Common myeloid progenitor, CD34-positive (primary cell): ENCODE measurements at regions of chr20 and their contacts with region 1.

Region 1: GRCh38 chr20:8043687-8044282 is 24.2 kb upstream of the TMX4 start:
- DNase-seq: peak; percentile 61 to 79 (median 74)
- H3K4me3 ChIP-seq: no peak overlapping the region
- H3K27ac ChIP-seq: no peak overlapping the region
- H3K4me1 ChIP-seq: peaks cover 0 to 3% (median 1%) of the 10 kb centered on the region in 4 experiments
- H3K27me3 ChIP-seq: no peaks in the 10 kb centered on the region

Region 2: DNA sequence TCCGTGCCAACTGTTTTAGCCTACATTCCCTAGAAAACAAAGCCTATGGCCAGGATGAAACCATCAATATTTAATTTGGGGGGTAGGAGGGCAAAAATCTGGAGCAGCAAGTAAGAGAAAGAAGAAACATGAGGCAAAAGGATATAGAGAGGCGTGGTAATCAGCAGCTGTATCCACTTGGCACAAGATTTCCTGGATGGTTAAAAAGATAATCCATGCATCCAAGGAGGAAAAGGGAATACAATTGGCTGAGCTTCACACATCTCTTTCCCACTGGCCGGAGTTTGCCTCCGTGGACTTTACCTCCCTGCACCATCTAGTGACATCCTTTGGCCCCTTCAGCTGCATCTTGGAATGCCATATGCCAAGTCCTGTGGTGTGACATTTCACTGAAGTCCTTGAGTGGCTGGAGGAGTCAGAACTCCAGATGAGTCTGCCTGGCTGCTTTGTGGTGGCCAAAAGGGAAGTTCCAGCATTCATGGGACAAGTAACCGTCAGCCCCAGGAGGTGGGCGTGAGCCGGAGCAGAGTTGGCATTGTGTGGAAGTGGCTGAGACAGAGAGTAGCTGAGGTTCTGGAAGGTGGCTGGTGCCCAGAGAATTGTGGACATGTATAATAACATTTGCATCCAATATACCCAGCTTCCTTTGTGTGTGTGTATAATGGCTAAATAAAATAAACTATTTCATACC is 10.5 kb before region 1 on chr20:
- CTCF ChIA-PET with region 1: interaction called, 16 read pairs
- POLR2A ChIA-PET with region 1: no interaction called
- DNase-seq: no peak
- H3K4me3 ChIP-seq: no peak overlapping the region
- H3K27ac ChIP-seq: no peak overlapping the region
- H3K4me1 ChIP-seq: no peaks in the 10 kb centered on the region
- H3K27me3 ChIP-seq: no peaks in the 10 kb centered on the region

Region 3: GRCh38 chr20:8055096-8055495 is 11.3 kb after region 1 on chr20:
- CTCF ChIA-PET with region 1: interaction called, 13 read pairs
- POLR2A ChIA-PET with region 1: no interaction called
- DNase-seq: no peak
- H3K4me3 ChIP-seq: no peak overlapping the region
- H3K27ac ChIP-seq: no peak overlapping the region
- H3K4me1 ChIP-seq: peaks cover 0 to 11% (median 7%) of the 10 kb centered on the region in 4 experiments
- H3K27me3 ChIP-seq: no peaks in the 10 kb centered on the region

Region 4: GRCh38 chr20:8073116-8073832 is 29.5 kb after region 1 on chr20:
- CTCF ChIA-PET with region 1: no interaction called
- POLR2A ChIA-PET with region 1: no interaction called
- DNase-seq: peak in 2 of 3 donors; percentile 37 to 53
- H3K4me3 ChIP-seq: no peak overlapping the region
- H3K27ac ChIP-seq: no peak overlapping the region
- H3K4me1 ChIP-seq: peaks cover 0 to 6% (median under 1%) of the 10 kb centered on the region in 4 experiments
- H3K27me3 ChIP-seq: no peaks in the 10 kb centered on the region

Region 5: DNA sequence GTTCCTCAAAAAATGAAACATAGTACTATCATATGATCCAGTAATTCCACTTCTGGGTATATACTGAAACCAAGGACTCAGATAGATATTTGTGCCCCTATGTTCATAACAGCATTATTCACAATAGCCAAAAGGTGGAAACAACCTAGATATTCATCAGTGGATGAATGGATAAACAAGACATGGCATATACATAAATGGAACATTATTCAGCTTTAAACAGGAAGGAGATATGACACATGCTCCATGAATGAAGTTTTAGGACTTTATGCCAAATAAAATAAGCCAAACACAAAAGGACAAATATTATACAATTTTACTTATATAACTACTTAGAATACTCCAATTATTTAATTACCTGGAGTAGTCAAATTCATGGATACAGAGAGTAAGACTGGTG is 104.7 kb after region 1 on chr20:
- CTCF ChIA-PET with region 1: no interaction called
- POLR2A ChIA-PET with region 1: no interaction called
- DNase-seq: no peak
- H3K4me3 ChIP-seq: no peak overlapping the region
- H3K27ac ChIP-seq: no peak overlapping the region
- H3K4me1 ChIP-seq: peaks cover 26 to 79% (median 61%) of the 10 kb centered on the region in 4 experiments
- H3K27me3 ChIP-seq: no peaks in the 10 kb centered on the region